Activated CD4-positive, alpha-beta memory T cell treated with anti-CD3 and anti-CD28 coated beads for 36 hours (primary cell): ENCODE measurements at regions of chr18 and their contacts with region 1.

Region 1: DNA sequence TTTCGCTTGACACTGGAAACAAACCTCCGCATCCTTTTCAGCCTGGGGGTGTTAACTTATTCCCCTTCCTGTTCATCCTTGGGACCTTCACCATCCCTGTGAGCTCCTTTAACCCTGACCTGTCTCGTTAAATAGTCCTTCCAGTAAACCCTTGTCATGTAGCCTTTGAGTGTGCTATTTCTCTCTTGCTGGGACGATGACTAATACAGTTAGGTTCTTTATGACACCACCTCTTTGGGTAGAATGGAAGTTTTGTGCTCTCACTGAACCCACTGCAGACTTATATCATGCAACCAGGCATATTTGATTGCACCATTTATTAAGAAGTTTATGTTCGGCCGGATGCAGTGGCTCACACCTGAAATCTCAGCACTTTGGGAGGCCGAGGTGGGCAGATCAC is 40.5 kb upstream of the GAREM1 start:
- DNase-seq: no peak
- H3K4me3 Mint-ChIP-seq: no peak overlapping the region
- H3K27ac Mint-ChIP-seq: no peak overlapping the region
- H3K4me1 Mint-ChIP-seq: peaks cover 3% of the 10 kb centered on the region
- H3K27me3 Mint-ChIP-seq: peaks cover 10% of the 10 kb centered on the region

Region 2: GRCh38 chr18:32373995-32374394 is 137.2 kb before region 1 on chr18:
- CTCF ChIA-PET with region 1: no interaction called
- POLR2A ChIA-PET with region 1: no interaction called
- intact Hi-C with region 1: no loop called
- DNase-seq: no peak
- H3K4me3 Mint-ChIP-seq: no peak overlapping the region
- H3K27ac Mint-ChIP-seq: no peak overlapping the region
- H3K4me1 Mint-ChIP-seq: no peaks in the 10 kb centered on the region
- H3K27me3 Mint-ChIP-seq: no peaks in the 10 kb centered on the region

Region 3: GRCh38 chr18:32530947-32531651 is 20.0 kb after region 1 on chr18:
- CTCF ChIA-PET with region 1: no interaction called
- POLR2A ChIA-PET with region 1: no interaction called
- intact Hi-C with region 1: loop called (anchors 1 kb)
- DNase-seq: peak; percentile 16
- H3K4me3 Mint-ChIP-seq: no peak overlapping the region
- H3K27ac Mint-ChIP-seq: no peak overlapping the region
- H3K4me1 Mint-ChIP-seq: peaks cover 12% of the 10 kb centered on the region
- H3K27me3 Mint-ChIP-seq: peaks cover 5% of the 10 kb centered on the region

Region 4: DNA sequence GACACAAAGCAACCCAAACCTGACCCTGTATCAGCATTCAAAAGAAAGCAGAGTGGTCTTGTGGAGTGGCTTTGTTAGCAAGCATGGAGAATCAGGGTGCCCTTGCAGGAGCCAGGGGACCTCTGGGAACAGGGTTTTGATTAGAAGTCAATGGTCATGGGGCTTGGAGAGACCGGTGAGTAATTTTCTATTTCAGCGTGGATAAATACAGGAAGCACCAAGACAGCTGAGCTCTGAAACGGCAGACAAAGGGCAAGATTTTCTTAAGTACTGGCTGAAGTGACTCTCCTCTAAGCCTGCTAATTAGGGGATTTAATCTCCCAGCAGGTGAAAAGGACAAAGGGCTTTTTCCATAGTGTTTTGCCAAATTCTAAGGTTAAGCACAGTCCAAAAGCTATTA is 37.5 kb after region 1 on chr18:
- CTCF ChIA-PET with region 1: no interaction called
- POLR2A ChIA-PET with region 1: no interaction called
- intact Hi-C with region 1: no loop called
- DNase-seq: no peak
- H3K4me3 Mint-ChIP-seq: no peak overlapping the region
- H3K27ac Mint-ChIP-seq: no peak overlapping the region
- H3K4me1 Mint-ChIP-seq: no peaks in the 10 kb centered on the region
- H3K27me3 Mint-ChIP-seq: peaks cover 7% of the 10 kb centered on the region